ENCODE measurements at regions of chr22 and their contacts with region 1.

Region 1: DNA sequence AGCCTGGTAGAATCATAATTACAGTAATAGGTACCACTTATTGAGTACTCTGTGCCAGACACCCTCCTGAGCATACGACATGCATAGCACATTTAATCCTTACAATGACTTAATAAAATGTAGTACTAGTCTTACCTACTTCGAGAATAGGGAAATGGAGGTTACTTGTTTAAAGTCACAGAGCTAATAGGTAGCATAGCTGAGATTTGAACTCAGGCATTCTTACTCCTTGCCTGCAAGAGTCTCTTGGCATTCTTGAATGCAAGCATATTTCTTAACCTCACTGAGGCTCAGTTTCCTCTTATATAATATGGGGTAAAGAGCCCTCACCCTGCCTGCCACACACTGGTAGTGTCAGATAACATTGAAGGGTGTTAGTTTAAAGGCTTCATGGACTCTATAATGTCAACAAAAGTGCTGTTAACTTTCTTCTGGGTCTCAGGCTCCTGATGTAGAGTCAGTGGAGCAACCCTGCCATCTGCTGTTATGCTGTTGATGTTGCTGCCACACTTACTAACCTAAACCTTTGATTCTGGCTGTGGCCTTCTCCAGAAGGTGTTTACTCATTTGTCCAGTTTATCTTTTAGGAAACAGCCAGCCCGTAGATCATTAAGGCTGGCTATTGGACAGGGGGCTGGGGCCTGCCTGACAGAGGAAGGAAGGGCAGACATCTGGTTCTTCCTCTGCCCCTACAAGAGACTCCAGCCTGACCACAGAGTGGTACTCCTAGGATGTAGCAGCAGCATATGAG is 18.9 kb downstream of the LIMK2 start:
- DNase-seq: peak; percentile 84 to 97 (median 95)
- H3K4me3 ChIP-seq: peak overlapping the region in 3 of 7 experiments; percentile 33 to 66 (median 35)
- H3K27ac ChIP-seq: peak overlapping the region; percentile 61 to 82
- H3K4me1 ChIP-seq: peaks cover 50 to 88% (median 78%) of the 10 kb centered on the region in 4 experiments
- H3K27me3 ChIP-seq: no peaks in the 10 kb centered on the region

Region 2: GRCh38 chr22:31199183-31199582 is 31.9 kb before region 1 on chr22:
- CTCF ChIA-PET with region 1: interaction called, 12 read pairs
- POLR2A ChIA-PET with region 1: interaction called, 3 read pairs
- DNase-seq: peak in 2 of 3 donors; percentile 10 to 19
- H3K4me3 ChIP-seq: no peak overlapping the region
- H3K27ac ChIP-seq: no peak overlapping the region
- H3K4me1 ChIP-seq: peaks cover 0 to under 1% (median 0%) of the 10 kb centered on the region in 4 experiments
- H3K27me3 ChIP-seq: no peaks in the 10 kb centered on the region

Region 3: GRCh38 chr22:31218565-31219262 is 12.3 kb before region 1 on chr22:
- CTCF ChIA-PET with region 1: interaction called, 242 read pairs
- POLR2A ChIA-PET with region 1: interaction called, 11 read pairs
- DNase-seq: no peak
- H3K4me3 ChIP-seq: no peak overlapping the region
- H3K27ac ChIP-seq: no peak overlapping the region
- H3K4me1 ChIP-seq: peaks cover 25 to 77% (median 44%) of the 10 kb centered on the region in 4 experiments
- H3K27me3 ChIP-seq: no peaks in the 10 kb centered on the region

Region 4: GRCh38 chr22:31248138-31248745 is 17.2 kb after region 1 on chr22:
- CTCF ChIA-PET with region 1: interaction called, 21 read pairs
- POLR2A ChIA-PET with region 1: no interaction called
- DNase-seq: peak; percentile 72 to 90 (median 86)
- H3K4me3 ChIP-seq: peak overlapping the region in 4 of 7 experiments; percentile 12 to 64 (median 42)
- H3K27ac ChIP-seq: no peak overlapping the region
- H3K4me1 ChIP-seq: peaks cover 0 to 28% (median 18%) of the 10 kb centered on the region in 4 experiments
- H3K27me3 ChIP-seq: no peaks in the 10 kb centered on the region